Colonic mucosa (tissue), 4 donors: ENCODE measurements at regions of chr11 and their contacts with region 1.

Region 1: DNA sequence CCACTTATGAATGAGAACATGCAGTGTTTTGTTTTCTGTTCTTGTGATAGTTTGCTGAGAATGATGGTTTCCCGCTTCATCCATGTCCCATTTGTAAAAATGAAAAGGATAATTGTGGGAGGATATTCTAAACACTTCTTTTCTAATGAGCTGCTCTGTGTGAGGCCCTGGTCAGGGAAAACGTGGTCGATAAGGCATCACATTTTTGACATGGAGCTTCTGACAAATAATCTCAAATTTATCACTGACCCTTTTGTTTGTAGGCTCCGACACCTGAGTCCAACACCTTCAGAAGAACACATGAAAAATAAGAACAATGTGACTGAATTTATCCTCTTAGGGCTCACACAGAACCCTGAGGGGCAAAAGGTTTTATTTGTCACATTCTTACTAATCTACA is at the start of gene OR4A15:
- DNase-seq: no peak
- H3K4me3 ChIP-seq: no peak within 1 kb of the TSS
- H3K27ac ChIP-seq: no peak within 1 kb of the TSS
- H3K4me1 ChIP-seq: no peaks in the 10 kb centered on the region
- H3K27me3 ChIP-seq: no peaks in the 10 kb centered on the region
- CTCF ChIP-seq: no peak
- total RNA-seq, gene OR4A15: not detected

Region 2: DNA sequence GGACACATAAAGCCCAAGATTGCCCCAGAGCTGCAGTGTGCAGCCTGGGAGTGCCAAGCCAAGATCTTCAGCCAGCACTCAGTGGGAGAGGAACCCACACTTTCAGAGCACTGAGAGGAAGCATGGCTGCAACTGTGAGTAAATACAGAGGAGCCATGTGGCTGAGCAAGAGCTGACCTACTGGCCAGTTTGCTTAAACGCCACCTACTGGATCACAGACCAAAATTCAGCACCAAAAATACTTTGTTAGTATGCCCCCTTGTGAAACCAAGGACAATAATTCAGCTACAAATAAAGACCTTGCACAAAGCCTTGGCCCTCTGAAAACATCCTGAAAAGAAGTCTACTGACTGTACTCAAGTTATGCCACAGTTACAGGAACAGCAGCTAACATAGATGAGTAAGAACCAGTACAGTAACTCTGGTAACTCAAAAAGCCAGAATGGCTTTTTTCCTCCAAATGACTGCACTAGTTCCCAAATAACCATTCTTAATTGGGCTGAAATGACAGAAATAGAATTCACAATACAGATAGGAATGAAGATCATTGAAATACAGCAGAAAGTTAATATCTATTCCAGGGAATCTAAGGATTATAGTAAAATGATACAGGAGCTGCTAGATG is 10.0 kb before region 1 on chr11:
- intact Hi-C with region 1: loop called (anchors 2 kb)
- DNase-seq: no peak
- H3K4me3 ChIP-seq: no peak overlapping the region
- H3K27ac ChIP-seq: no peak overlapping the region
- H3K4me1 ChIP-seq: no peaks in the 10 kb centered on the region
- H3K27me3 ChIP-seq: no peaks in the 10 kb centered on the region
- CTCF ChIP-seq: no peak